Cardiac septum (tissue), 1 donor: ENCODE measurements at regions of chr7 and their contacts with region 1.

Region 1: DNA sequence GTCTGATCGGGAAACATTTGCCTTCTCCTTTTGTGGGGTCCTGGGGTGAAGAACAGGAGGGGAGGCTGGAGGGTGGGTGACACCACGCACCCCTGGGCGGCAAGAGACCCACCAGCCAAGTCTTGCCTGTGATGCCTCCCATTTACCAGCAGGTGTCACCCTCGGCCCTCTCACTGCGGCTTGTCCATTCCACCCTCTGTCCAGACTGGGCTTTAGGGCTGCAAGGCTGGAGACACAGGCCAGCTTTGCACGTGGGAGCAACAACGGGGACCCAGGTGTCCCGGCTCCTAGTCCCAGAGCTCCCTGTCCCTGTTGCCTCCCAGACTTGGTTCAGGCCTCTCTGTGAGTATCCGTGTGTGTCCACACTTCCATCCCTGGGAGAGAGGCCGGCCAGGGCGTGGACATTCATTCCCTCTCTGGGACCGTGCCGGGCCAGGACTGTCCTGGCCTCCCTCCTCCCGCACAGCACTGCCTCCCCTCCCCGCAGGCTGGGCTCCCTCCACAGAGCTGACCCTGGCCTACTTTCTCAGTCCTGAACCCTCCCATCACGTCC is 36.2 kb upstream of the GTF2IRD1 start:
- DNase-seq: peak; percentile 86

Region 2: DNA sequence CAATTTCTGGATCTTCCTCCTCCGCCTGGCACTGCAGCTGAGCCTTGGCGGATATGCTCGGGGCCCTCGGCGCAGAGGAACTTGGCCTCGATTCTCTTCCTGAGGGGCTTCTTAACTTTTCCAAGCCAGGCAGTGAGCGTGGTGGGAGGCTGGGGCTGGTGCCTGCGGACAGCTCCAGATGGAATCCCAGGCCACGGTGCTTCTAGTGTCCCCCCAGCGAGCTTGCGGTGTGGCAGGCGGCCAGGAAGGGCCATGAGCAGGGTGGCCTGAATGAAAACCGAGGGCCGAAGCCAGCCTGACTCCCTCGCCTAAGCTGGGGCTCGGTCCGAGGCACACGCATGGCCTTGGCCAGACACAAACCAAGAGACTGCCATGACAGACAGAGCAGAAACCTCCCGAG is 624.8 kb after region 1 on chr7:
- intact Hi-C with region 1: loop called (anchors 5 kb)
- DNase-seq: no peak